ENCODE measurements at regions of chr5 and their contacts with region 1.

Region 1: DNA sequence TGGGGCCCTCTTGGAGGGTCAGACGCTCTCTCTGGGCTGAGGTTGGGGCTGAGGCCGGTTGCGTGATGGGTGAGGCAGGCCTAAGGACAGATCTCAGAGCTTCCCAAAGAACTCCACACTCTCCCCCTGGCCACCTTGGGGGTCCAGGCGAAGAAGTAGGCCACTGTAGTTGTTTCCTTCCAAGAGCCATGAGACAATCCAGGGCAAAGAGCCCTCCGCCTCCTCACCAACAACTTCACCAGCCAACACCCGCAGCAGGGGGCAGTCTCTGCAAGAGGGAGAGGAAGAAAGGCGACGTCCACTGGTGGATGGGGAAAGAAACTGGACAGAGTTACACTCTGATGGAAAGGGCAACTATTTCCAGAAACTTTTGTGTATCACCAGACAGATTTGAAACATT is 10.7 kb downstream of the SLC35A4 start:
- DNase-seq: peak; percentile 54
- ATAC-seq: no peak
- H3K4me3 Mint-ChIP-seq: no peak overlapping the region
- H3K27ac Mint-ChIP-seq: no peak overlapping the region
- H3K4me1 Mint-ChIP-seq: peaks cover under 1% of the 10 kb centered on the region
- H3K27me3 Mint-ChIP-seq: no peaks in the 10 kb centered on the region

Region 2: GRCh38 chr5:140718241-140718580 is 142.9 kb after region 1 on chr5:
- CTCF ChIA-PET with region 1: interaction called, 3 read pairs
- POLR2A ChIA-PET with region 1: no interaction called
- intact Hi-C with region 1: loop called in 1 of 2 experiments (anchors 1 kb)
- DNase-seq: no peak
- ATAC-seq: no peak
- H3K4me3 Mint-ChIP-seq: no peak overlapping the region
- H3K27ac Mint-ChIP-seq: no peak overlapping the region
- H3K4me1 Mint-ChIP-seq: peaks cover 4% of the 10 kb centered on the region
- H3K27me3 Mint-ChIP-seq: peaks cover 7% of the 10 kb centered on the region

Region 3: GRCh38 chr5:140977003-140977402 is 401.7 kb after region 1 on chr5:
- CTCF ChIA-PET with region 1: no interaction called
- POLR2A ChIA-PET with region 1: interaction called, 12 read pairs
- intact Hi-C with region 1: no loop called
- DNase-seq: no peak
- ATAC-seq: no peak
- H3K4me3 Mint-ChIP-seq: no peak overlapping the region
- H3K27ac Mint-ChIP-seq: no peak overlapping the region
- H3K4me1 Mint-ChIP-seq: no peaks in the 10 kb centered on the region
- H3K27me3 Mint-ChIP-seq: peaks cover 19% of the 10 kb centered on the region